ENCODE measurements at regions of chr2 and their contacts with region 1.

Region 1: GRCh38 chr2:161273038-161273760 is 35.0 kb upstream of the PSMD14 start:
- DNase-seq: no peak
- ATAC-seq: no peak

Region 2: GRCh38 chr2:160010402-160011145 is 1262.6 kb before region 1 on chr2:
- intact Hi-C with region 1: no loop called
- DNase-seq: no peak
- ATAC-seq: no peak

Region 3: DNA sequence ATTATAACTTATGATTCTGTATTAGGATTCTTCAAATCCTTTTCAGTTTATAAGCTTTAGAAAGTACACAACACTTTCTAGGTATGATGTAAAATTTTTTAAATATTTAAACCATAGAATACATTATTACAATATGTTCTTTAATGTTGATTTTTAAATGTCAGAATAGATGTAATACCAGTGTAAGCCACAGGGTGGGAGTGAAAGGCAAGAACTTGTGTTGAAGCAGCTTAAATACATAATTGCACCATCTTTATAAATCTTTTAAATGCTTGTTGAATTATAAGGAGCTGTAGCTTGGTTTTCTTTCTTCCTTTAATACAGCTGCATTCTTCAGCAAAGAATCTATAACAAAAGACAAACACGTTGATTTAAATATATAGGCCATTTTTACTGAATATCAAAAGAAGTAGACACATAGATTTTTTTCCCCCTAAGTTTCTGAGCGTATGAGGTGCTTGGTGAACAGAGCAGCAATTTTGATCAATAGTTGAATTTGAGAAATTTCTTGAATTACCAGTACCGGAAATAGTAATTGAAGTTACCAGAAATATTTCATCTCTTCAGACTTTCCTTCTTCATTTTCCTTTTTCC is 50.0 kb before region 1 on chr2:
- intact Hi-C with region 1: loop called (anchors 5 kb)
- DNase-seq: no peak
- ATAC-seq: no peak

Measured in left ventricle myocardium superior (tissue), 1 donor.